ENCODE measurements at regions of chr1 and their contacts with region 1.

Region 1: GRCh38 chr1:85091671-85092280 is 43.5 kb upstream of the MCOLN3 start:
- DNase-seq: no peak
- CTCF ChIP-seq: no peak

Region 2: DNA sequence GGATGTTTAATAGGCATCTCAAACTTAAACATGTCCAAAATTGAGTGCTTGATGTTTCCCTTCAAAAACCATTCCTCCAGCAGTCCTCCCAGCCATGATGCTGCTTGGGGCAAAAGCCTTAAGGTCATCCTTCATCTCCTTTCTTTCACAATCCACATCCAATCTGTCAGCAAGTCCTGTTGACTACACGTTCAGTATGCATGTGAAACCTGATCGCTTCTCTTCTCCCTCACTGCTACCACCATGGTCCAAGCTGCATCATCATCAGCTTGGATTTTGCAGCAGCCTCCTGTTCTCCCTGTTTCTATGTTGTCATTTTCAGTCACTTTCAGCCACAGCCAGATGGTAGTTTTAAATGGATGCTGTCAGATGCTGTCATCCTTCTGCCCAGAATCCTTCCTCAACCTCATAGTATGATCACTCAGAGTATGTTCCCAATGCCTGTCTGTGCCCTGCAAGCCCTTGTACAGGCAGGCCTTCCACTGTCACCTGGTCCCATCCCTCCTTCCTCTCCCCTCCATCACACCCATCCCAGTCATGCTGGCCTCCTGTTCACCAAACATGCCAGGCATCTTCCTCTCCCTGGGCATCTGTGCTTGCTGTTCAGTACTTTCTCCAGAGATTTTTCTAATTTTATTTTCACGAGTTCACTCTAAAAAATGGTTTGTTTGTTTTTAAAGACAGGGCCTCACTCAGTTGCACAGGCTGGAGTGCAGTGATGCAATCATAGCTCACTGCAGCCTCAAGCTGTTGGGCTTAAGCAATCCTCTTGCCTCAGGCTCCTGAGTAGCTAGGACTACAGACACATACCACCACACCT is 43.0 kb after region 1 on chr1:
- CTCF ChIA-PET with region 1: no interaction called
- POLR2A ChIA-PET with region 1: interaction called, 10 read pairs
- DNase-seq: no peak
- CTCF ChIP-seq: no peak

Measured in GM10248 (cell line).